ENCODE measurements at regions of chr4 and their contacts with region 1.

Region 1: DNA sequence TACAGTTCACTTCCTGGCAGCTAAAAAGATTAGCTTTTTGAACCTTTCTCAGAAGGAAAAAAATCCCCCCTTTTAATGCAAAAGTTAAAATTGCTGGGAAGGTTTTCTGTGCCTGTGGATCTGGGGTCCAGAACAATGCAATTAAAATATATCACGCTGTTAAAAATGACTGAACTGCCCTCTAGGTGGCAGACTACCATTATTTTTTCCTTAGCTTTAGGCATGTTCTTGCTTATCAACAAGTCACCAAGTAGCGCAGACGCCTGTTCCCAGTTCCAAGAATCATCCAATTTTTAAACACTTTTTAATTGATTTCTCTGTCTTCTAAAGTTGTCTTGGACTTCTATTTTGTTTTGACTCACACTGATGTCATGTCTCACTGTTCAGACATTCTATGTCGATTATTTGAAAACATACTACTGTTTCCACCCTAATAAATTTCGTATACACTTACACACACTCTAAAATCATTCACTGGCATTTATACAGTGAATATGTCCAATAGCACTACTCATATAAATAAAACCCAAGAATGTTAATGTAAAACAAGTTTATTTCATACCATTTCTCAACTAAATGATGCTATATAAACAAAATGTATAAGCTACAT is 661.6 kb downstream of the RAPGEF2 start:
- DNase-seq: peak; percentile 28
- CTCF ChIP-seq: peak; percentile 61

Region 2: DNA sequence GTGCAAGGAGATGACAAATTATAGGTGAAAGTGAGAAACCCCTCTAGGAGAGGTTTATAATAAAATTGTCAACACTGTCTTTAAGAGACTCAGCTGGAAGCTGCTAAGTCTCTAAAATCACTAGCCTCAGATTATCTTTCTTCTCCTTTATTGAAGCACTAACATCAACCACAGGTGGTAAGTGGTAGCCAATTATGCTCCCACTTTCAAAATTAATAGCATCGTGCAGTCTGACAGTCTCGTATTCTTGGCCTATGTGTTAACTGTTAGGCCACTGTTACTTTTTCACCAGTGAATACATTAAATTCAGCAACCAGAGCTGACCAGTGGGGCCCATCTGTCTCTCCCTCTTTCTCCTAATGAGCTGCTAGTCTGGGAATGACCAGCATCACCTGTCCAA is 12.5 kb after region 1 on chr4:
- CTCF ChIA-PET with region 1: interaction called, 11 read pairs
- POLR2A ChIA-PET with region 1: no interaction called
- DNase-seq: no peak
- CTCF ChIP-seq: no peak

Measured in GM10248 (cell line).